H1 (cell line): ENCODE measurements at regions of chr1 and their contacts with region 1.

Region 1: DNA sequence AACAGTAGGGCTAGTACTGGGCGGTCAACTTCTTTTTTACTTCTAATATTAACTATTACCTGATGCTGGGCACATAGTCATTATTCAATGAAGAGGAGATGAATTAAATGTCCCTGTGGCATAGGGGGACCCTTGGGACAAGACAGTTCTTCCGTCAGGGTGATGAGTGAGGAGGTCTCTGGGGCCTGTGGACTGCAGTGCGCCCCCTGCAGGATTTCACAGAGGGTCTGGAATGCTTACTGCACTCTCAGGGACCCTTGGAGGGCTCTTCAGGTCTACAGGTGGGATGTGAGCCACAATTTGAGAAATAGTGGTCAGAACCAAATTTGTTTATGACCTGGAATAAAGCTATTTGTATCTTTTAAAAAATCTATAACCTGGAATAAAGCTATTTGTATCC is 149.4 kb downstream of the FAM78B start:
- DNase-seq: peak in 1 of 2 experiments; percentile 66
- H3K4me3 ChIP-seq: no peak overlapping the region
- H3K27ac ChIP-seq: no peak overlapping the region
- H3K4me1 ChIP-seq: no peaks in the 10 kb centered on the region
- H3K27me3 ChIP-seq: no peaks in the 10 kb centered on the region; a peak in 2 of 7 replicates
- CTCF ChIP-seq: peak; percentile 72 to 87 (median 83)
- EP300 ChIP-seq: no peak
- POLR2A ChIP-seq: no peak
- RAD21 ChIP-seq: peak; percentile 61 to 68

Region 2: DNA sequence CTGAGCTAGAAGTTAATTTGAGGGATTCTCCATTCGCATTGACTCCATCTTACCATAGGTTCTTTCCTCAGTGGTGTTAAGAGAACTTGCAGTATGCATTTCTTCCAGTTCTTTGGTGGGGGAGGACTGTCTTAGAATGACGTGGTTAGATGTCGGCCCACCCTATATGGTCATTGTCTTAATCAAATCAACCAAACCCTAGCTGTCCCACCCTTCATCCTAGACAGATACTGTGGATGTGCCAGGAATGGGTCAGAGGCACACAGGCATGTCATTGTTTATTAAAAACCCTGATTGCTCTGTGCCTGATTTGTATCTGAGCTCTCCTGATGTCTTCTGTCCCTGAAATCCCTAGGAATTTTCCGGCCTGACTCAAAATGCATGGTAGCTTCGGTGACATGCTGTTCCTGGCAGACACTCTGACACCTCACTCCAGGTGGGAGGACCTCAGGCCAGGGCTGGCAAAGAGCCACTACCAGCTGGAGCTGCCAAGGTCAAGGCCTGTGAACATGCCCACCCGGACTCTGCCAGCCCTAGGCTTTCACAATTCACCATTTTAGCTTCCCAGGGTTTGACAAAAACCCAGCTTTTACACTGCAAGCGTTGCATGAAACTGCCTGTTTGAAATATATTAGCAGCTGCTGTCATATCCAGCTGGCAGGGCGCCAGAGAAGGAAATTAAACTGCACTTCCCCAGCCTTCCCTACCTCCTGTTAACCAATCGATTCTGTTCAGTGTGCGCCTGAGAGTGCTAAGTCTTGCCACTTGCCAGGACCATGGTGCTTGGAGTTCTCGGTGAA is 15.4 kb after region 1 on chr1:
- CTCF ChIA-PET with region 1: interaction called, 16 read pairs
- POLR2A ChIA-PET with region 1: interaction called, 3 read pairs
- DNase-seq: no peak
- H3K4me3 ChIP-seq: no peak overlapping the region
- H3K27ac ChIP-seq: no peak overlapping the region
- H3K4me1 ChIP-seq: peaks cover 0 to 8% (median 2%) of the 10 kb centered on the region in 4 experiments; a peak in 3 of 7 replicates
- H3K27me3 ChIP-seq: no peaks in the 10 kb centered on the region
- CTCF ChIP-seq: no peak
- EP300 ChIP-seq: no peak
- POLR2A ChIP-seq: no peak
- RAD21 ChIP-seq: no peak